ENCODE measurements at regions of chr15 and their contacts with region 1.

Region 1: DNA sequence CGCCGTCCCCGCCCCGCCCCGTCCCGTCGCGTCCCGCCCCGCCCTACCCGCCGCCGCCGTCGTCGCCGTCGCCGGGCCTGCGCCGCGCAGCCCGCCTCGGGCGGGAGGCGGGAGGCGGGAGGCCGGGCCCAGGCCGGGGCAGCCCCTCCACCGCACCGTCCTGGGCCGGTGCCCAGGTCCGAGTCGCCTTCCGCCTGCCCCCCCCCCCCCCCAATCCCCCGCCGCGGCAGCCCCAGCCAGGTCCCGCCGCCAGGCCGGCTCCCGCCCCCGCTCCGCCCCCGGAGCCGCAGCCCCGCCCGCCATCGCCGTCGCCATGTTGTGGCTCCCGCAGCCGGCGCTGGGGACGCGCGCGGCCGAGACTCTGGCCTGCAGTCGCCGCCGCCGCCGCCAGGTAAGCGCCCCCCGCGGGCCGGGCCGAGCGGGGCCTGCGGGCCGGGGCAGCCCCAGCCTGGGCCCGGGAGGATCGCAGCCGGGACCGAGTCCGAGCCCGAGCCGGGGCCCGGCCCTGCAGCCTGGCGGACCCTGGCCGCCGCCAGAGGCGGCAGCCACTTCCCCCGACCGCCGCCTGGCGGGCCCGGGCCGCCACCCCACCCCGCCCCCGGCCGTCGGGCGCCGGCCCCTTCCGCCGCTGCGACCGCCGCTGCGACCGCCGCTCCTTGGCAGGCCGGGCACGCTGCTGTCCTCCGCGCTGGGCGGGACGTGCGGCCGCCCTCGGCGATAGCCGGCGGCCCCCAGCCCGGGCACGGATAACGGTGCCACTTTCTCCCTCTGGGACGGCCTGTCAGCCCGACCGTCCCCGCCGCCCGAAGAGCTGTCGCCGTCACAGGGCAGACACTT is at the start of gene ZNF592:
- DNase-seq: peak; percentile 66
- H3K4me3 ChIP-seq: peak within 1 kb of the TSS; percentile 86 to 91 (median 88)
- H3K27ac ChIP-seq: peak within 1 kb of the TSS; percentile 77
- H3K4me1 ChIP-seq: peaks cover 23% of the 10 kb centered on the region
- H3K27me3 ChIP-seq: no peaks in the 10 kb centered on the region
- CTCF ChIP-seq: no peak
- total RNA-seq, gene ZNF592: 9.7 to 19.5 TPM

Region 2: GRCh38 chr15:84588053-84588874 is 160.2 kb before region 1 on chr15:
- CTCF ChIA-PET with region 1: no interaction called
- dilution Hi-C with region 1: no loop called
- in situ Hi-C with region 1: no loop called
- intact Hi-C with region 1: no loop called
- DNase-seq: peak; percentile 71
- H3K4me3 ChIP-seq: peak overlapping the region in 2 of 3 experiments; percentile 25 to 33
- H3K27ac ChIP-seq: no peak overlapping the region
- H3K4me1 ChIP-seq: peaks cover 13% of the 10 kb centered on the region
- H3K27me3 ChIP-seq: no peaks in the 10 kb centered on the region
- CTCF ChIP-seq: peak; percentile 36 to 81

Region 3: DNA sequence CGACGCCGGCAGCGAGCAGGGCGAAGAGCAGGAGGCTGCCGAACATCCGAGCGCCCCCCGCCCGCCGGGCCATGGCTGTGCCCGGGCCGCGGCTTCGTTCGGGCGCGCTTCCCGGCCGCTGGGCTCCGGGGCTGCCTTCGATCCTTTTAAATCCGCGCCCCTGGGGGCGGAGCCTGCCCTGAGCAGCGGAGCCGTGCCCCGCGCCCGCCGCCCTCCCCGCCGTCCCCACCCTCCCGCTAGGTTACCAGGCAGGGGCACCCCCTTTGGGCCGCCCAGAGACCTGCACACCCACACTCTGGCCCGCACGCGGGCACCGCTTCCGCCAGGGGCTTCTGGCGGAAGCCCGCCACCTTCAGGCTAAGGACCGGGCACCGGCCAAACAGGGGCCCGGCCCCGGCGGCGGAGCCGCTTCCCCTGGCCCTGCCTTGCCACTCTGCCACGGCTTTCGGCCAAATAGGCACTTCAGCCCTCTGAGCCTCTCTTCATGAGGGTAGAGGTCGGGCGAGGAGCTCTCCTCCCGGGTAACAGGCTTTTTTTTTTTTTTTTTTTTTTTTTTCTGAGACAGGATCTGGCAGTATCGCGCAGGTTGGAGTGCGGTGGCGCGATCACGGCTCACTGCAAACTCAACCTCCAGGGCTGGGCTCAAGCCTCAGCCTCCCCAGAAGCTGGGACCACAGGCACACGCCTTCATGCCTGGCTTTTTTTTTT is 90.3 kb before region 1 on chr15 and contains the start of gene NMB:
- CTCF ChIA-PET with region 1: no interaction called
- dilution Hi-C with region 1: no loop called
- in situ Hi-C with region 1: loop called in 1 of 2 experiments (anchors 10 kb)
- intact Hi-C with region 1: loop called (anchors 1 kb)
- DNase-seq: peak; percentile 54
- H3K4me3 ChIP-seq: peak within 1 kb of the TSS; percentile 40 to 57 (median 56)
- H3K27ac ChIP-seq: peak within 1 kb of the TSS; percentile 30
- H3K4me1 ChIP-seq: peaks cover 16% of the 10 kb centered on the region
- H3K27me3 ChIP-seq: no peaks in the 10 kb centered on the region
- CTCF ChIP-seq: peak; percentile 30 to 75
- total RNA-seq, gene NMB: 1.0 to 3.7 TPM

Region 4: GRCh38 chr15:84671211-84671610 is 77.3 kb before region 1 on chr15:
- CTCF ChIA-PET with region 1: no interaction called
- dilution Hi-C with region 1: no loop called
- in situ Hi-C with region 1: no loop called
- intact Hi-C with region 1: loop called (anchors 5 kb)
- DNase-seq: peak; percentile 75
- H3K4me3 ChIP-seq: no peak overlapping the region
- H3K27ac ChIP-seq: peak overlapping the region; percentile 29
- H3K4me1 ChIP-seq: peaks cover 16% of the 10 kb centered on the region
- H3K27me3 ChIP-seq: no peaks in the 10 kb centered on the region
- CTCF ChIP-seq: no peak

Region 5: GRCh38 chr15:84716036-84716799 is 32.3 kb before region 1 on chr15 and contains the start of gene SEC11A:
- CTCF ChIA-PET with region 1: no interaction called
- dilution Hi-C with region 1: no loop called
- in situ Hi-C with region 1: no loop called
- intact Hi-C with region 1: loop called (anchors 1 kb)
- DNase-seq: peak; percentile 97
- H3K4me3 ChIP-seq: peak within 1 kb of the TSS; percentile 71 to 97 (median 85)
- H3K27ac ChIP-seq: peak within 1 kb of the TSS; percentile 66
- H3K4me1 ChIP-seq: peaks cover 10% of the 10 kb centered on the region
- H3K27me3 ChIP-seq: no peaks in the 10 kb centered on the region
- CTCF ChIP-seq: no peak
- total RNA-seq, gene SEC11A: 130 to 146 TPM

Region 6: DNA sequence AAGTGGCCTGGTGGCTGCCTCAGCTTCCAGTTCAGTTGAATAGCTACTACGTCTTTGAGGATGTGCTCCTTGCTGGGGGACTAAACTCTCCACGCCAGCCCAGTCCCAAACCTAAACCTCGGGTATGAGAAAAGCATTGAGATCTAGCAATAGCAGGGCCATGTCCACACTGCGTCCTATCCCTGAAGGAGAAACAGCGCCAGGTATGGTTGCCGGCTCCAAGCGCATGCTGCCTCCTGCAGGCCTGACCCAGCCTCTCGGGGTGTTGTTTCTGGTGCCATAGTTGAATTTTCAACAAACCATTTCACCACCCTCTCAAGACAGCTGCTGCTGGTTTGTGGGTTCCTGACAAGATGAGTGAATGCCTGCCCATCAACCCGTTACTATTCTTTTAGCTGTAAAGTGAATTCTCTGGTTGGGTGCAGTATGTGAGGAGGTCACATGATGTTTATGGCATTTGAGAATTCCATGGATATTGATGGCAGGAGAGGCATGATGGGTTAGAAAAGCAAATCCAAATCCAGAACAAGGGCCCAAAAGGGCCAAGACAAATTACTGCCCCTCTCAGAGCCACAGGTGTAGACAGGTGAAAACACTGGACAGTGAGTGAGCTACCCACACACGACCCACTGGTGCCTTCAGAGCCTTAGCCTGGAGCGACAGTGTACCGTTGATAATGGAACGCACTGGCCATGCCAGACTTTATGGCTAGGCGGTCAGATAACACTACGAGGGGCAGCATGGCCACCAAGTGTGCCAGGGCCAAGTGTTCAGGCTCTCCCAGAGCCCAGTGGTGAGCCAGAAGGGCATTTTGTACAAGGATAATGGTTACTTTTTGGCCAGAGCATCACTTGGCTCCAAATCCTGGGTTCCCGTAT is 123.2 kb after region 1 on chr15:
- CTCF ChIA-PET with region 1: no interaction called
- dilution Hi-C with region 1: no loop called
- in situ Hi-C with region 1: no loop called
- intact Hi-C with region 1: loop called (anchors 5 kb)
- DNase-seq: no peak
- H3K4me3 ChIP-seq: no peak overlapping the region
- H3K27ac ChIP-seq: no peak overlapping the region
- H3K4me1 ChIP-seq: no peaks in the 10 kb centered on the region
- H3K27me3 ChIP-seq: no peaks in the 10 kb centered on the region
- CTCF ChIP-seq: no peak

Region 7: DNA sequence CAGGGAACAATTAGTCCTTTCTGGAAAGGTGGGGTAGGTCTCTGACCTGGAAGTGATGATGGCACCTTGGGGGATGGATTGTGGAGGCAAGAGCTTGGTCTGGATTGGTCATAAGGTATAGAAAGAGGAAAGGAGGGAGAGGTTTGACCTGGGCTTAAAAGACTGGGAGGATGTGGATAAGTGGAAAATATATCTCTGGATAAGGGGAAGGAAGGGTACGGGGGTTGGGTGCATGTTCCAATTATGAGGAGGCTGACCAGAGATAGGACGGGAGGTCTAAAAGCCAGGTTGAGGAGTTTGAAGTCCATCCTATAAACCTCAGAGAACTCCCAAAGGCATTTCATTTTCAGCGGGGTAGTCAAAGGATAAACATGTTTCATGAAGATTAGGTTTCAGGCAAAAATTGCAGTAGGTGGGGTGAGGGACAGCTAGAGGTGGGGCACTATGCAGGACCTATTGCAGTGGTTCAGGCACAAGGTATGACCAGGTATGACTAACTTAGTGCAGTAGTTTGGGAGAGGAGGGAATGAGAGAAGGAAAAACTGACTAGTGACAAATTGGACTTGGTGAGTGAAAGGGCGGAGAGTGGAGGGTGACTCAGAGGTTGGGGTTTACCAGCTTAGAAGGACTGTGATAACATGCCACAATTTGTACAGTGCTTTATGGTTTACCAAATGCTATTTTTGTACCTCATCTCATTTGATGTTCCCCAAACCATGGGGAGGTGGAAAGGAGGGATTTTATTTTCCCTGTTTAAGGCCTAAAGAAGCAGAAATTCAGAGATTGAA is 243.9 kb after region 1 on chr15:
- CTCF ChIA-PET with region 1: no interaction called
- dilution Hi-C with region 1: no loop called
- in situ Hi-C with region 1: no loop called
- intact Hi-C with region 1: no loop called
- DNase-seq: peak; percentile 97
- H3K4me3 ChIP-seq: no peak overlapping the region
- H3K27ac ChIP-seq: peak overlapping the region; percentile 63
- H3K4me1 ChIP-seq: peaks cover 17% of the 10 kb centered on the region
- H3K27me3 ChIP-seq: no peaks in the 10 kb centered on the region
- CTCF ChIP-seq: no peak

Region 8: GRCh38 chr15:85658816-85659215 is 910.3 kb after region 1 on chr15:
- CTCF ChIA-PET with region 1: no interaction called
- dilution Hi-C with region 1: no loop called
- in situ Hi-C with region 1: no loop called
- intact Hi-C with region 1: no loop called
- DNase-seq: no peak
- H3K4me3 ChIP-seq: no peak overlapping the region
- H3K27ac ChIP-seq: no peak overlapping the region
- H3K4me1 ChIP-seq: no peaks in the 10 kb centered on the region
- H3K27me3 ChIP-seq: no peaks in the 10 kb centered on the region
- CTCF ChIP-seq: no peak

Measured in mammary epithelial cell (primary cell).